T-cell (primary cell): ENCODE measurements at regions of chr9 and their contacts with region 1.

Region 1: DNA sequence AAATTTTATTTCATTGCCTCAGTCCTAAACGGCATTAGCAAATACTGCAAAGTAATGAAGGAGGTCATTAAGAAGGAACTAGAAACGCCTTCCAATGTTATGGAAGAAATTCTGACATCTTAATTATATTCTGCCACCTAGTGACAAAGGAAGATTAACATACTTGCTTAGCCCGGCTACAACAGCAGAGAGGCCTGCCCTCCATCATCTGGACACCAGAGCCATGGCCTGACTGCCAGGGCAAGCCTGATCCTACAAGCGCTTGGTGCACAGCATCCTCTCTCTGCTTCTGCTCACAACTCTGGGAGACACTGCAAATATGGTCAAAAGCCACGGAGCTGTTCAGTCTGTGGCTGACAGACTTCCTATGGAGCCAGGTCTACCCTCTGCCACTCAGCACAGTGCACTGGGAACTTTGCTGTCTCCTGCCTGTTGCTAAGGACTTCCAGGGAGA is 87.3 kb upstream of the SLC44A1 start:
- DNase-seq: peak in 12 of 35 experiments; percentile 1 to 56 (median 6)
- ATAC-seq: peak; percentile 65 to 75 (median 68)
- H3K4me3 ChIP-seq: no peak overlapping the region
- H3K4me3 Mint-ChIP-seq: no peak overlapping the region
- H3K27ac ChIP-seq: no peak overlapping the region
- H3K27ac Mint-ChIP-seq: no peak overlapping the region
- H3K4me1 ChIP-seq: peaks cover 6% of the 10 kb centered on the region in 2 experiments
- H3K4me1 Mint-ChIP-seq: peaks cover 15 to 17% (median 17%) of the 10 kb centered on the region in 3 donors
- H3K27me3 ChIP-seq: peaks cover 0 to 2% of the 10 kb centered on the region in 2 experiments
- H3K27me3 Mint-ChIP-seq: peaks cover 0 to 2% of the 10 kb centered on the region in 2 donors

Region 2: DNA sequence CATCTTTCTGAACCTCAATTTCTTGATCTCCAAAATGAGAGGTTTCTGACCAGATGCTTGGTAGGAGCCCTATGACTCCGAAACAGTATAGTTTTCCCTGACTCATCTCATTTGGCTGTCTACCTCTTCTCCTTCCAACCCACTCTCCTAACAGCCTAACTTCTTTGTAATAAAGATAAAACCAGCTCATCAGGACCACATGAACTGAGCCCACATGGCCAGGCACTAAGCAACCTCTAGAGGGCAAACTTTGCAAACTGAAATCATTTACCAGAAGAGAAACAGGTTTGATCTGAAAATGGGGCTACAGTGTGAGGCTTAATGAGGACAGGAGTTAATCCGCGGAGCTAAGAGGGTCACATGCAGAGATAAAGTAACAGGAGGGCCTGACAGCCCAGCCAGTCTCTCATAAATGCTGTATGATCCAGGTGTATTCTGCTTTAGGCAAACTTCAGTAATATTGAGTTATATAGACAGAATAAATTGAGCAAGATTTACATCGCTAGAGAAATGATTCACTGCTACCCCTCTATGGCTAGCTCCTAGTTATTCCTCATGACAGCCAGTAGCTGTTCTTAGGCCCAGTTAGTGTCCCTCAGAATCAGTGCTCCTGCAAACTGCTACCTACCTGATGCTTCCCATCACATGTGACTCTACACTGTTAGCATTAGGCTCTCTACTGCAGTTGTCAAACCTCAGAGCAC is 293.8 kb before region 1 on chr9:
- CTCF ChIA-PET with region 1: interaction called, 7 to 12 read pairs
- POLR2A ChIA-PET with region 1: no interaction called
- DNase-seq: peak in 33 of 35 experiments; percentile 8 to 73 (median 33)
- ATAC-seq: peak; percentile 55 to 88 (median 78)
- H3K4me3 ChIP-seq: no peak overlapping the region
- H3K4me3 Mint-ChIP-seq: no peak overlapping the region
- H3K27ac ChIP-seq: no peak overlapping the region
- H3K27ac Mint-ChIP-seq: no peak overlapping the region
- H3K4me1 ChIP-seq: no peaks in the 10 kb centered on the region
- H3K4me1 Mint-ChIP-seq: peaks cover 4 to 6% (median 5%) of the 10 kb centered on the region in 3 donors
- H3K27me3 ChIP-seq: no peaks in the 10 kb centered on the region
- H3K27me3 Mint-ChIP-seq: no peaks in the 10 kb centered on the region

Region 3: GRCh38 chr9:104921067-104921741 is 236.0 kb before region 1 on chr9:
- CTCF ChIA-PET with region 1: interaction called in 1 of 2 experiments, 12 read pairs
- POLR2A ChIA-PET with region 1: no interaction called
- DNase-seq: no peak
- ATAC-seq: no peak
- H3K4me3 ChIP-seq: no peak overlapping the region
- H3K4me3 Mint-ChIP-seq: no peak overlapping the region
- H3K27ac ChIP-seq: no peak overlapping the region
- H3K27ac Mint-ChIP-seq: no peak overlapping the region
- H3K4me1 ChIP-seq: peaks cover 0 to 4% of the 10 kb centered on the region in 2 experiments
- H3K4me1 Mint-ChIP-seq: peaks cover 4 to 34% (median 28%) of the 10 kb centered on the region in 3 donors
- H3K27me3 ChIP-seq: peaks cover 0 to 8% of the 10 kb centered on the region in 2 experiments
- H3K27me3 Mint-ChIP-seq: peaks cover 0 to 1% of the 10 kb centered on the region in 2 donors

Region 4: DNA sequence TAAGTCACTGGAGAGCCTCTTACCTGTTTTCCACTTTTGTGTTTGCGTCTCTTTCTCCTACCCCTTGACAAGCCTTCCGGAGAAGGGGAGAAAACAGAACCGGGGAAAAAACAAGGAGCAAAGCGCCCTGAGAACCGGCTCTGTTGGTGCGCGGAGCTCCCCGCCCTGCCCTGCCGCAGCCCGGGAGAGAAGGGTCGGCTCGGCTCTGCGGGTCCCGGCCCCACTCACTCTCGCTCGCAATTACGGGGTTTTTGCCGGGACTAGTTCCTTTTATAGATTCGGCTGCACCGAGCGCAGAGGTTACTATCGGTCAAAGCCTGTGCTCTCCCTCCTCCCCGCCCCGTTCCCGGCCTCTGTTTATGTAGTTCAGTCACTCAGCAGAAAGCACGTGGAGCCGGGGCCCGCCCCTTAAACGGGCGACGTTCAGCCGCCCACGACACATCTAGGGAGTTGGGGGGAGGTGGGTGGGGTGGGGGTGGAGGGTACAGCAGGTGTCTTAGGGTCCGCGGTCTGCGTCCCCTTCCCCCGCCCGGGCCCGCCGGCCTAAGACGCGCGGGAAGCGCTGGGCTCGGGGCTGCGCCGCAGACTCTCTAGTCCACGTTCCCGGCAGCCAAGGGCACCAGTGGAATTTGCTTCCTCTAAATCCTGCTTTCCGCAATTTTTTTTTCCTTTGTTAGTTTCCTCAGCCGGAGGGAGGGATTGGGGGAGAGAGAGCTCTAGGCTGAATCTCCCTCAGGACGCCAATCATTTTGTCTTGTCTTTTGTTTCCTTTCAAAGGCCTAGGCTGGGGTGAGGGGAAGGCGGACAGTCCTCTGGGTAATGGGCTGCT is 229.0 kb before region 1 on chr9 and contains the start of gene ABCA1:
- CTCF ChIA-PET with region 1: interaction called, 3 to 11 read pairs
- POLR2A ChIA-PET with region 1: no interaction called
- DNase-seq: peak in 34 of 35 experiments; percentile 55 to 87 (median 74)
- ATAC-seq: peak; percentile 65 to 84 (median 70)
- H3K4me3 ChIP-seq: peak within 1 kb of the TSS; percentile 64 to 90
- H3K4me3 Mint-ChIP-seq: peak within 1 kb of the TSS; percentile 83 to 93 (median 86)
- H3K27ac ChIP-seq: peak within 1 kb of the TSS; percentile 41
- H3K27ac Mint-ChIP-seq: peak within 1 kb of the TSS in 1 of 2 donors; percentile 11
- H3K4me1 ChIP-seq: peaks cover 0 to 29% of the 10 kb centered on the region in 2 experiments
- H3K4me1 Mint-ChIP-seq: peaks cover 9 to 33% (median 22%) of the 10 kb centered on the region in 3 donors
- H3K27me3 ChIP-seq: peaks cover 0 to 31% of the 10 kb centered on the region in 2 experiments
- H3K27me3 Mint-ChIP-seq: peaks cover 0 to 1% of the 10 kb centered on the region in 2 donors
- total RNA-seq, gene ABCA1: 0.41 to 4.7 (median 0.62) TPM

Region 5: GRCh38 chr9:105168870-105169319 is 11.7 kb after region 1 on chr9:
- CTCF ChIA-PET with region 1: interaction called in 1 of 2 experiments, 4 read pairs
- POLR2A ChIA-PET with region 1: interaction called in 1 of 2 experiments, 10 read pairs
- DNase-seq: no peak
- ATAC-seq: no peak
- H3K4me3 ChIP-seq: no peak overlapping the region
- H3K4me3 Mint-ChIP-seq: no peak overlapping the region
- H3K27ac ChIP-seq: no peak overlapping the region
- H3K27ac Mint-ChIP-seq: no peak overlapping the region
- H3K4me1 ChIP-seq: no peaks in the 10 kb centered on the region
- H3K4me1 Mint-ChIP-seq: no peaks in the 10 kb centered on the region
- H3K27me3 ChIP-seq: no peaks in the 10 kb centered on the region
- H3K27me3 Mint-ChIP-seq: peaks cover 4 to 6% of the 10 kb centered on the region in 2 donors

Region 6: DNA sequence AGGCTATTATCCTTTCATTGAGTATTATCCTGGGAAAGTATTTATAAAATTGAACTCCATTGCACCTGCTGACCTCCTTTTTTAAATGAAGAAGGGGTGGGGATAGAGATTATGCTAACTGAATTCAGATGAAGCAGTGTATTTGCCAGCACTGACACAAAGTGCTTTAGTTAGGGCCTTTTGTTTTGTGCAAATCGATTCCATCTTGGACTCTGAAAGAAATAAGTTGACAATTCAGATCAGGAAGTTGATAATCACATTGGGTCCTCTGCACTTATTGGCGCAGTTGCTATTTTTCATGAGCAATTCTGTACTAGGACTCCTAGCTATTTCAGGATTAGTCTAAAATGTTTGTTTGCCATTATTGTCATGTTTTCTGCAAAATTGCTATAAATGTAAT is 189.1 kb after region 1 on chr9:
- CTCF ChIA-PET with region 1: no interaction called
- POLR2A ChIA-PET with region 1: no interaction called
- DNase-seq: no peak
- ATAC-seq: no peak
- H3K4me3 ChIP-seq: no peak overlapping the region
- H3K4me3 Mint-ChIP-seq: no peak overlapping the region
- H3K27ac ChIP-seq: no peak overlapping the region
- H3K27ac Mint-ChIP-seq: no peak overlapping the region
- H3K4me1 ChIP-seq: peaks cover 0 to 3% of the 10 kb centered on the region in 2 experiments
- H3K4me1 Mint-ChIP-seq: peaks cover 10 to 15% (median 14%) of the 10 kb centered on the region in 3 donors
- H3K27me3 ChIP-seq: no peaks in the 10 kb centered on the region
- H3K27me3 Mint-ChIP-seq: no peaks in the 10 kb centered on the region